CD8-positive, alpha-beta T cell (primary cell): ENCODE measurements at regions of chr6 and their contacts with region 1.

Region 1: DNA sequence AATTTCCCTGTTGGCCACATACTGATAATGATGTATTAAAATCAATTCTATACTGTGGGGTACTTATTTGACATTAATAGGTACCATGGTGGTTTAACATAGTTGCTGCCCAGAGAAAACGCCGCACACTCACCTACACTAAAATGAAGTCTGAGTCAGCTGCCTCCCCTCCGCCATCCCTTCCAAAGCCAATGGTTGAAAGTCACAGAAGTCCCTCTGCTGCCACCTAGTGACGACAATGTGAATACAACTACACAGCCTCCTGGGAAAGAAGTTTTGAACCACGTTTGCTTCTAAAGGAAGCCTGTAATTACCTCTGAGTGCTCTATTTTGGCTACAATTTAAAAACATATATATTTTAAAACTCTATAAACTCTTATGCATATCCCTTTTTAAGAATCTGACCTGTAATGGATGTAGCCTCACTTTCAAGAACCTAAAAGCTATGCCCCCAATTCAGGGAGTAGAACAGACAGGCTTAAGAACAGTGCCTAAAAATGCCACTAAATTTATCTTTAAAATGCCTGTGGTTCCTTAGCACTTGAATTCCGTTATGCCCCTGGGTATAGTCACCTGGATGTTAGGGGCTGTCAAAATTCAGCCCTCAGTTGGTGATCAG is 20.6 kb upstream of the ECI2 start:
- DNase-seq: peak; percentile 53 to 88 (median 77)
- ATAC-seq: peak; percentile 99
- H3K4me3 ChIP-seq: no peak overlapping the region
- H3K4me3 Mint-ChIP-seq: no peak overlapping the region
- H3K27ac ChIP-seq: no peak overlapping the region
- H3K27ac Mint-ChIP-seq: no peak overlapping the region
- H3K4me1 ChIP-seq: no peaks in the 10 kb centered on the region
- H3K4me1 Mint-ChIP-seq: peaks cover 3% of the 10 kb centered on the region
- H3K27me3 ChIP-seq: no peaks in the 10 kb centered on the region
- H3K27me3 Mint-ChIP-seq: peaks cover 4% of the 10 kb centered on the region
- CTCF ChIP-seq: peak; percentile 92

Region 2: GRCh38 chr6:4055420-4056041 is 100.4 kb before region 1 on chr6:
- CTCF ChIA-PET with region 1: interaction called, 7 read pairs
- POLR2A ChIA-PET with region 1: no interaction called
- intact Hi-C with region 1: loop called (anchors 1 kb)
- DNase-seq: peak in 3 of 9 experiments; percentile 24 to 28 (median 26)
- ATAC-seq: no peak
- H3K4me3 ChIP-seq: no peak overlapping the region
- H3K4me3 Mint-ChIP-seq: no peak overlapping the region
- H3K27ac ChIP-seq: no peak overlapping the region
- H3K27ac Mint-ChIP-seq: peak overlapping the region; percentile 2
- H3K4me1 ChIP-seq: peaks cover 13% of the 10 kb centered on the region
- H3K4me1 Mint-ChIP-seq: peaks cover 19% of the 10 kb centered on the region
- H3K27me3 ChIP-seq: no peaks in the 10 kb centered on the region
- H3K27me3 Mint-ChIP-seq: no peaks in the 10 kb centered on the region
- CTCF ChIP-seq: no peak

Region 3: DNA sequence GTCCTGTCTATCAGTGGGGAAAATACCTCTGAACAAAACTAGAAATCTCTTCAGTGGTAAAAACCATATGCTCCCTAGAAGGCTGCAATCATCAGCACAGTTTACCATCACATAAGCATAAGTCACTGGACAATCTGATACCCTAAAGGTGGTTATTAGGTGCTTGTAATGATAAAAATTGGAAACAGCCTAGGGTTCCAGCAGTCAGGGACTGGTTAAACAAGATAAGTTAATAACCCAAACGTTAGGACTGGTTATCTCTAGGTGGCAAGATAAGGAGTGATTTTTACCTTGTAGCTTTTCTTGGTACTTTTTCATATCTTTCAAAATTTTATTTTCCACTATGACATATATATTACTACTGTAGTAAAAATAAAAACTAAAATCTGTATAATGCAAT is 31.6 kb before region 1 on chr6:
- CTCF ChIA-PET with region 1: interaction called, 5 read pairs
- POLR2A ChIA-PET with region 1: no interaction called
- intact Hi-C with region 1: loop called in 1 of 2 experiments (anchors 5 kb)
- DNase-seq: no peak
- ATAC-seq: no peak
- H3K4me3 ChIP-seq: no peak overlapping the region
- H3K4me3 Mint-ChIP-seq: no peak overlapping the region
- H3K27ac ChIP-seq: no peak overlapping the region
- H3K27ac Mint-ChIP-seq: no peak overlapping the region
- H3K4me1 ChIP-seq: no peaks in the 10 kb centered on the region
- H3K4me1 Mint-ChIP-seq: peaks cover 2% of the 10 kb centered on the region
- H3K27me3 ChIP-seq: no peaks in the 10 kb centered on the region
- H3K27me3 Mint-ChIP-seq: no peaks in the 10 kb centered on the region
- CTCF ChIP-seq: no peak

Region 4: GRCh38 chr6:4145083-4145482 is 10.9 kb before region 1 on chr6:
- CTCF ChIA-PET with region 1: interaction called, 10 read pairs
- POLR2A ChIA-PET with region 1: no interaction called
- intact Hi-C with region 1: no loop called
- DNase-seq: no peak
- ATAC-seq: no peak
- H3K4me3 ChIP-seq: no peak overlapping the region
- H3K4me3 Mint-ChIP-seq: no peak overlapping the region
- H3K27ac ChIP-seq: no peak overlapping the region
- H3K27ac Mint-ChIP-seq: no peak overlapping the region
- H3K4me1 ChIP-seq: no peaks in the 10 kb centered on the region
- H3K4me1 Mint-ChIP-seq: no peaks in the 10 kb centered on the region
- H3K27me3 ChIP-seq: no peaks in the 10 kb centered on the region
- H3K27me3 Mint-ChIP-seq: no peaks in the 10 kb centered on the region
- CTCF ChIP-seq: no peak

Region 5: GRCh38 chr6:4270776-4271175 is 114.8 kb after region 1 on chr6:
- CTCF ChIA-PET with region 1: no interaction called
- POLR2A ChIA-PET with region 1: no interaction called
- intact Hi-C with region 1: no loop called
- DNase-seq: no peak
- ATAC-seq: no peak
- H3K4me3 ChIP-seq: no peak overlapping the region
- H3K4me3 Mint-ChIP-seq: no peak overlapping the region
- H3K27ac ChIP-seq: no peak overlapping the region
- H3K27ac Mint-ChIP-seq: no peak overlapping the region
- H3K4me1 ChIP-seq: no peaks in the 10 kb centered on the region
- H3K4me1 Mint-ChIP-seq: no peaks in the 10 kb centered on the region
- H3K27me3 ChIP-seq: no peaks in the 10 kb centered on the region
- H3K27me3 Mint-ChIP-seq: peaks cover 7% of the 10 kb centered on the region
- CTCF ChIP-seq: no peak

Region 6: DNA sequence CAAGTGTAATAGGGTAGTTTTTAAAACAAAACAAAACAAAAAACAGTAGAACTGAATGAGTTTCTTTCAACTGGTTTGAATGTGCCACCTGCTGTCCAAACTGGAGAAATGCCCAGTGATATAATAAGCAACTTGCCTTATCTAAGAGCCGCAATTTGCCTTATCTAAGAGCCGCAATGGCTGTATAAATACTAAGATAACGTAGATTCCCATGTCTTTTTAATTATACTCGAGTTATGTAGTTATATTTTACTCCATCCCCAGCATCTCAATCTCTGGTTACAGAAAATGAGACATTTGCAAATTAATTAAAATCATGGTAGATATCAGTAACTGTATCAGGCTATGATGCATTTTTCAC is 780.7 kb after region 1 on chr6:
- CTCF ChIA-PET with region 1: no interaction called
- POLR2A ChIA-PET with region 1: no interaction called
- intact Hi-C with region 1: loop called in 1 of 2 experiments (anchors 5 kb)
- DNase-seq: peak in 2 of 9 experiments; percentile 43 to 61
- ATAC-seq: no peak
- H3K4me3 ChIP-seq: no peak overlapping the region
- H3K4me3 Mint-ChIP-seq: no peak overlapping the region
- H3K27ac ChIP-seq: no peak overlapping the region
- H3K27ac Mint-ChIP-seq: no peak overlapping the region
- H3K4me1 ChIP-seq: peaks cover 22% of the 10 kb centered on the region
- H3K4me1 Mint-ChIP-seq: peaks cover 57% of the 10 kb centered on the region
- H3K27me3 ChIP-seq: no peaks in the 10 kb centered on the region
- H3K27me3 Mint-ChIP-seq: no peaks in the 10 kb centered on the region
- CTCF ChIP-seq: peak; percentile 59